Activated B cell treated with CpG ODN at 0.5 μM for 24 hours (primary cell): ENCODE measurements at regions of chr9 and their contacts with region 1.

Region 1: DNA sequence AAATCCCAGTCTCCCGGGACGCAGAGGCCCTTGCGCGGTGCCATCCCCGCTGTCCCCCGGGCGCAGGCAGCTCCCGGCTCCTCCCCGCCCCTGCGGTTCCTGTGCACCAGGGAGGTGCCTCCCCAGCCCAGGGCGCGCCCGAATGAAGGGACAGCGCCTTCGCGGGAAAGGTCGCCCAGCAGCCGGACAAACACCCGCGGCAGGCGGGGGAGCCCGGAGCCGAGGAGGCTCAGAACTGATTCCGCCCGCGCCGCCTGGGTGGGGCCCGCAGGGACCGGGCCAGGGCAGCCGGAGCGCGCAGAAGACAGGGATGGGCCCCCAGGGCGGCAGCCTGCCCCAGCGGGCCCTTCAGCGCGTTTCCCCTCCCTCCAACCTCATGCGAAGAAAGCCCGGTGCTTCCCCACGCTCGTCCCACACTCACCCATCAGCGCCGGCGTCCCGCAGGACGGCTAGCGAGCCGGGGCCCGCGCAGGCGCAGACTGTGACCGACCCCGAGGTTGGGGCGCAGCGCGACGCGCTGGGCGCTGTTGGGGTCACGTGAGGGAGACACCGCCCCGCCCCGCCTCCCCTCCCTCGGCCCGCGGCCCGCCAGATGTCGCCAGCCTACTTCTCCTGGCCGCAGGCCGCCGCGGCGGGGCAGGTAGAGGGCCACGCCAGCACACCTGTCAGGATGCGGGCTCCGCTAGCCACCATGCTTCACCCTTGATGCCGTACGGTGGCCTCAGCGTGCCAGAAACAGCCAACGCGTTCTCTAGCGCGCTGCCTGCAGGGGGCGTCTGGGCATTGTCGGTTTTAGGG is at the start of gene SLC25A51:
- DNase-seq: peak; percentile 98
- ATAC-seq: peak; percentile 82
- H3K4me3 Mint-ChIP-seq: peak within 1 kb of the TSS; percentile 85
- H3K27ac Mint-ChIP-seq: peak within 1 kb of the TSS; percentile 92
- H3K4me1 Mint-ChIP-seq: peaks cover 24% of the 10 kb centered on the region
- H3K27me3 Mint-ChIP-seq: no peaks in the 10 kb centered on the region
- CTCF ChIP-seq: no peak
- total RNA-seq, gene SLC25A51: 30.5 and 33.9 TPM in 2 replicates

Region 2: GRCh38 chr9:36765468-36766341 is 1138.1 kb before region 1 on chr9:
- CTCF ChIA-PET with region 1: no interaction called
- POLR2A ChIA-PET with region 1: no interaction called
- intact Hi-C with region 1: loop called (anchors 5 kb)
- DNase-seq: peak; percentile 89
- ATAC-seq: peak; percentile 98
- H3K4me3 Mint-ChIP-seq: no peak overlapping the region
- H3K27ac Mint-ChIP-seq: no peak overlapping the region
- H3K4me1 Mint-ChIP-seq: no peaks in the 10 kb centered on the region
- H3K27me3 Mint-ChIP-seq: peaks cover 17% of the 10 kb centered on the region
- CTCF ChIP-seq: no peak

Region 3: GRCh38 chr9:36788534-36788933 is 1115.3 kb before region 1 on chr9:
- CTCF ChIA-PET with region 1: no interaction called
- POLR2A ChIA-PET with region 1: no interaction called
- intact Hi-C with region 1: no loop called
- DNase-seq: no peak
- ATAC-seq: no peak
- H3K4me3 Mint-ChIP-seq: no peak overlapping the region
- H3K27ac Mint-ChIP-seq: no peak overlapping the region
- H3K4me1 Mint-ChIP-seq: no peaks in the 10 kb centered on the region
- H3K27me3 Mint-ChIP-seq: peaks cover 10% of the 10 kb centered on the region
- CTCF ChIP-seq: no peak

Region 4: GRCh38 chr9:37753489-37754190 is 150.2 kb before region 1 on chr9 and contains the start of gene TRMT10B:
- CTCF ChIA-PET with region 1: no interaction called
- POLR2A ChIA-PET with region 1: no interaction called
- intact Hi-C with region 1: loop called (anchors 2 kb)
- DNase-seq: peak; percentile 62
- ATAC-seq: peak; percentile 92
- H3K4me3 Mint-ChIP-seq: peak within 1 kb of the TSS; percentile 96
- H3K27ac Mint-ChIP-seq: peak within 1 kb of the TSS; percentile 89
- H3K4me1 Mint-ChIP-seq: peaks cover 22% of the 10 kb centered on the region
- H3K27me3 Mint-ChIP-seq: no peaks in the 10 kb centered on the region
- CTCF ChIP-seq: no peak
- total RNA-seq, gene TRMT10B: 11.7 and 15.0 TPM in 2 replicates

Region 5: GRCh38 chr9:37800631-37801286 is 103.1 kb before region 1 on chr9 and contains the start of gene DCAF10:
- CTCF ChIA-PET with region 1: no interaction called
- POLR2A ChIA-PET with region 1: interaction called, 8 read pairs
- intact Hi-C with region 1: loop called (anchors 1 kb)
- DNase-seq: peak; percentile 96
- ATAC-seq: peak; percentile 81
- H3K4me3 Mint-ChIP-seq: peak within 1 kb of the TSS; percentile 92
- H3K27ac Mint-ChIP-seq: peak within 1 kb of the TSS; percentile 89
- H3K4me1 Mint-ChIP-seq: peaks cover 40% of the 10 kb centered on the region
- H3K27me3 Mint-ChIP-seq: no peaks in the 10 kb centered on the region
- CTCF ChIP-seq: no peak
- total RNA-seq, gene DCAF10: 16.8 and 19.1 TPM in 2 replicates

Region 6: GRCh38 chr9:38068866-38069629 is 165.2 kb after region 1 on chr9 and contains the start of gene SHB:
- CTCF ChIA-PET with region 1: no interaction called
- POLR2A ChIA-PET with region 1: no interaction called
- intact Hi-C with region 1: loop called (anchors 1 kb)
- DNase-seq: peak; percentile 71
- ATAC-seq: peak; percentile 84
- H3K4me3 Mint-ChIP-seq: peak within 1 kb of the TSS; percentile 82
- H3K27ac Mint-ChIP-seq: no peak within 1 kb of the TSS
- H3K4me1 Mint-ChIP-seq: peaks cover 14% of the 10 kb centered on the region
- H3K27me3 Mint-ChIP-seq: peaks cover 25% of the 10 kb centered on the region
- CTCF ChIP-seq: no peak
- total RNA-seq, gene SHB: 0.44 and 0.81 TPM in 2 replicates

Region 7: DNA sequence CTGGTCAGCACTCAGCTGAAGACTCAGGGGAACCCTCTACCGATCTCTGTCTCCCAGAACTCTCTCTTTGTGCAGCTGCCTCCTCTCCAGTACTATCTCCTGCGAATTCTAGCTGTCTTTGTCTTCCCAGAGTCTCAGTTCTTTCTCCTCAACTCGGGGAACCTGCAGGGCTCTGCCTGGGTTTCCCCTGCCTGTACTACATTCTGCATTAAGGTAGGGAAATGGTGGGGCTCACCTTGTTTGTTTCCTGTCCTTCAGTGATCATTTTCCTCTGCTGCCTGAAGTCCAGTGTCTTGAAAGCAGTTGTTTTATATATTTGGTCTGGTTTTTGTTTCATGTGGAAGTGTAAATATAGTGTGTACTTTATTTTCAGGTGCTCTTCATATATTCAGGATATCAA is 563.6 kb after region 1 on chr9:
- CTCF ChIA-PET with region 1: no interaction called
- POLR2A ChIA-PET with region 1: no interaction called
- intact Hi-C with region 1: no loop called
- DNase-seq: no peak
- ATAC-seq: no peak
- H3K4me3 Mint-ChIP-seq: no peak overlapping the region
- H3K27ac Mint-ChIP-seq: no peak overlapping the region
- H3K4me1 Mint-ChIP-seq: no peaks in the 10 kb centered on the region
- H3K27me3 Mint-ChIP-seq: peaks cover 25% of the 10 kb centered on the region
- CTCF ChIP-seq: no peak